ENCODE measurements at regions of chr6 and their contacts with region 1.

Region 1: DNA sequence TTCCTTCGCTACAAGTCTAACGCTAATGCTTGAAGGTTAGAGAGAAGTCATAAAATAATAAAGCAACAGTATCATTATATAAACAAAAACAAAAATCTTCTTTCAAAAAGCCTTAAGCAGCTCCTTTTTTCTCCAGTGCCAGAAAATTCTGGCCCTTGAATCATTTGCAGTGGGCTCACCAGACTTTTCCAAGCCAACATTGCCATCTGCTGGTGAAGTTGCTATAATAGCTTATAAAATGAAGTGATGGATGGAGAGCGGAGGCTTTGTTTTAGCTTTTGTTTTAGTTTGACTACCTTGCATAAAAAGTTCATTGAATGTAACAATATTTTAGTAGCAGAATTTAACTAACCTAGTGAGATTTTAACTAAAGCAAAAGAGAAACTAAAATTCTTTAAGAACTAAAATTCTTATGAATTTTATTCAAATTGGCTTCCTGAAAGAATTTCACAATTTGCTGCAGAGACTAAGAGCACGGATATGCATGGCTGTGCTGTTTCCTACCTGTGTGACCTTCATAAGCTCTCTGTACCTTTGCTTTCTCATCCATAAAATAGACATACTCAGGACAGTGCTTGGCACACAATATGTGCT is 44.8 kb upstream of the SLC2A12 start:
- DNase-seq: peak; percentile 62
- CTCF ChIP-seq: peak; percentile 55

Region 2: DNA sequence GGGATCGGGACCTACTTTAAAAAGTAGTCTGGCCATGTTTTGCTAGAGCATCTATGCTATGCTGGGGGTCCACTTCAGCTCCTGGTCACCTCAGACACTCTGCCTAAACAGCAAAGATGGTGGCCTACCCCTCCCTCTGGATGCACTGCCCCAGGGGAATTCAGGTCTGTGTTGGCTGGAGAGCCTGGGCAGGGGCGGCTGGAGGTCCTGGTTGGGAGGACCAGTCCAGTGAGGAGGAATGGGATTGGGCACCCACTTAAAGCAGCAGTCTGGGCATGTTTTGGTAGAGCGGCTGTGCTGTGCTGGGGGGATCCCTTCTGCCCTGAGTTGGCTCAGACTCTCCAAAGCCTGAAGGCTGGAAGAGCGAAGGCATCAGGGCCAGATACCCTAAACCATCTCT is 231.5 kb before region 1 on chr6:
- CTCF ChIA-PET with region 1: no interaction called
- POLR2A ChIA-PET with region 1: no interaction called
- DNase-seq: no peak
- CTCF ChIP-seq: no peak

Region 3: GRCh38 chr6:134080171-134080795 is 16.9 kb before region 1 on chr6:
- CTCF ChIA-PET with region 1: interaction called, 56 read pairs
- POLR2A ChIA-PET with region 1: no interaction called
- DNase-seq: no peak
- CTCF ChIP-seq: no peak

Region 4: GRCh38 chr6:134111062-134111677 is 14.0 kb after region 1 on chr6:
- CTCF ChIA-PET with region 1: interaction called, 29 read pairs
- POLR2A ChIA-PET with region 1: no interaction called
- DNase-seq: peak; percentile 74
- CTCF ChIP-seq: peak; percentile 89

Measured in GM10248 (cell line).